ENCODE measurements at regions of chr18 and their contacts with region 1.

Region 1: DNA sequence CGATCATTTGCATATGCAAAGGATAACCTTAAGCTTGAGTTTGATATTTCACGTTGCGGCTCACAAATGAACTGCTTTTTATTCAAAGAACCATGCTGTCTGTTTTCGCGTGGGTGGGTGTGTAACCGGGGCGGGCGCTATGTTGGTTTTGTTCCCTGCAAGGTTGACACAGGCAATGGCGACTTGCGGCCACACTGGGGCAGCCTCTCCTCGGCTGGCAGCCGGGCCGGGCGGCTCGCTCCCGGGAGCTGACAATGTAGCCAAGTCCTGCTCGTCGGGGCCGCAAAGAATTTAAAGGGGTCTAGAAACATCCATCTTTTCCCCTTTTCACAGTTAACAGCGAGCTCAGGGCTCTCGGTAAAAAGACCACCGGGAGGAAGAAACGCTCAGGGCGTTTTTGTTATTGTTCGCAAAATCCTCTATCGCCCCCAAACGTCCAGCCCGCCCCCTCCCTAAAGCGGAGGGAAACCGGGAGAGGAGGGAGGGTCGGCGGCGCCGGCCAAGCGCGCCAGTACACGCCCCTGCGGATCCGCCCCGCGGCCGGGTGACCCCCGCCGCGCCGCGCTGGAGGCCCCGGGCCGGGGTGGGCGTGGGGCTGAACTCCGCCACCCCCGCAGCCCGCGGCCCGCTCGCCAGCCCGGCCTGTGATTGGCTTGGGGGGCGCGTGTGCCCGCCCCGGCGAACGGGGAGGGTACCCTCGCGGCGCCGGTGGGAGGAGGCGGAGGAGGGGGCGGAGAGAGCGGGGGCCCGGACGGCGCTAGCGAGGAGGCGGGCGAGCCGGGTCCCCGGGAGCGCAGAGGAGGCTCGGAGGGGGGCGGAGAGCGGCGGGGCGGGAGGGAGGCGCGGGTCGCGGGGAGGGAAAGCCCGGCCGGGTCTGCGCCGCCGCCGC is at the start of gene NEDD4L:
- DNase-seq: peak; percentile 79 to 85
- H3K4me3 ChIP-seq: peak within 1 kb of the TSS; percentile 81
- H3K4me3 Mint-ChIP-seq: peak within 1 kb of the TSS; percentile 90
- H3K27ac Mint-ChIP-seq: peak within 1 kb of the TSS; percentile 65
- H3K4me1 ChIP-seq: no peaks in the 10 kb centered on the region
- H3K4me1 Mint-ChIP-seq: peaks cover 14% of the 10 kb centered on the region
- H3K27me3 ChIP-seq: no peaks in the 10 kb centered on the region
- H3K27me3 Mint-ChIP-seq: no peaks in the 10 kb centered on the region
- CTCF ChIP-seq: peak; percentile 66 to 71
- total RNA-seq, gene NEDD4L: 84.4 and 85.4 TPM in 2 replicates

Region 2: DNA sequence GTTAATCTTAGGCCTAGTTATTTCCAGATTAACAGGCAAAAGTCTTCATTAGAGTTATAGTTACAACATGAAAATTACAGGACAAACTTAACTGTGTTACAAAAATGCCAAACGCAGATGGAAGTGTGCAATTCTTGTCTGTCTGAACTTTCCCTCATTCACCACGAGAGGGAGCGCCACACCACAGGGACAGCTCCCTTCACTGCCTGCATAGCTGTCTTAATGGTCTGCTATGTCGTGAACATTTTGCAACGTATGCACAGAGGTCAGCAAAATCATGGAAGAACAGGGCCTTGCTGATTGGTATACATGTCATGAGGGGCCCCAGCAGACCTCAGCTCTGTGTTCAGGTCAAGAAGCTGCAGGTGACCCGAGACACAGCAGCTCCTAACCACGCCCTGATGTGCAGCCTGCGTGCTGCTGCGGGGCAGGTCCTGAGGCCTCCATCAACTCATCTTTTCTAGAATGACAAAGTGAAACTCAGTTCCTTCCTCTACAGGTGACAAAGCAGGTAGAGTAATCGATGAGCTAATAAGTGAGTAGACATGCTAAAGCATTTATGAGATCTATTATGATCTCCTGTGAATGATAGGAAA is 161.8 kb before region 1 on chr18:
- CTCF ChIA-PET with region 1: no interaction called
- POLR2A ChIA-PET with region 1: no interaction called
- intact Hi-C with region 1: loop called (anchors 1 kb)
- DNase-seq: peak; percentile 56 to 65
- H3K4me3 ChIP-seq: no peak overlapping the region
- H3K4me3 Mint-ChIP-seq: no peak overlapping the region
- H3K27ac Mint-ChIP-seq: no peak overlapping the region
- H3K4me1 ChIP-seq: peaks cover 4% of the 10 kb centered on the region; the same call in 1 of the 2 replicates
- H3K4me1 Mint-ChIP-seq: no peaks in the 10 kb centered on the region
- H3K27me3 ChIP-seq: no peaks in the 10 kb centered on the region
- H3K27me3 Mint-ChIP-seq: no peaks in the 10 kb centered on the region
- CTCF ChIP-seq: peak; percentile 62 to 66

Region 3: DNA sequence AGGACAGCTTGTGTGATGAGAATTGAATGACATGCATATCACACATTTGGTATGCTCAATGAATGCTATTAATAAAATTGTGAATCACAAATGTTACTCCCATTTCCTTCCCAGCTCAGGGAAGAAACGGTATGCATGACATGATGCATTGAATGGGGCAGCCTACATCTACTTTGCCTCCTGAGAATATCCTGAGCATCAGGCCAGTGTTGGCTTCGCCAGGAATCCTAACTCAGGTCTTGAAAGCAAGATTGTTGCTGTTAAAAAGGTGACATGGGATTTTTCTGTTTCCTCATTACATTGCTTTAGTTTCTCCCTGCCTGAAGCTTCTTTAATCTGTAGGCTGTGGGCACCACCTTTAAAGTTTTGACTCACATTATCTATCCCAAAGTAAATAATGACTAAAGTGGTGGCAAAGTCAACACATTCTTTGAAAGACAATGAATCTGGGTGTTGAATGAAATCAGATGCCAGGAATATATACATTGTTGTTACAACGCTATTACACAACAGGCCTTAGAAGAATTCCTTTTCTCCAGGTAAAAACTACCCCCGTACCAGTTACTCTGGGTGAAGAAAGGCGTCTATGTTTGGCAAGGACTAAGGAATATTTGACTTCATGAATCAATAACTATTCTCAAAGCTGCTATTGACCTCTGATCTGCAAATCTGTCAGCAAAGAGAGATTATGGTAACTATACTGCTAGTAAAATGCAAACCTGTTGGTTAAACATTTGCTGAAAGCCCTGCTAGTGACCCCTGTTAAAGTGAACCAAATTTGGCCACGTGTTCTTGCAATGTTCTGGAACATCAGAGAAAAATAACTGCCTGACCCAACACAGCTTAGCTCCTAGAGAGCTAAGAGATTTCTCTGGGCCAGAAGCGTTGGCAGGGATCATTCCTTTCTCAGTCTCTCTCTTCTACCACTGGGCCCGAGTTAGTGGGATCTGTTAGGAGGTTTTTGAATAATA is 30.2 kb before region 1 on chr18:
- CTCF ChIA-PET with region 1: no interaction called
- POLR2A ChIA-PET with region 1: no interaction called
- intact Hi-C with region 1: loop called (anchors 1 kb)
- DNase-seq: peak; percentile 67 to 68
- H3K4me3 ChIP-seq: no peak overlapping the region
- H3K4me3 Mint-ChIP-seq: no peak overlapping the region
- H3K27ac Mint-ChIP-seq: peak overlapping the region; percentile 35
- H3K4me1 ChIP-seq: peaks cover 47% of the 10 kb centered on the region
- H3K4me1 Mint-ChIP-seq: peaks cover 6% of the 10 kb centered on the region
- H3K27me3 ChIP-seq: no peaks in the 10 kb centered on the region
- H3K27me3 Mint-ChIP-seq: no peaks in the 10 kb centered on the region
- CTCF ChIP-seq: no peak

Region 4: DNA sequence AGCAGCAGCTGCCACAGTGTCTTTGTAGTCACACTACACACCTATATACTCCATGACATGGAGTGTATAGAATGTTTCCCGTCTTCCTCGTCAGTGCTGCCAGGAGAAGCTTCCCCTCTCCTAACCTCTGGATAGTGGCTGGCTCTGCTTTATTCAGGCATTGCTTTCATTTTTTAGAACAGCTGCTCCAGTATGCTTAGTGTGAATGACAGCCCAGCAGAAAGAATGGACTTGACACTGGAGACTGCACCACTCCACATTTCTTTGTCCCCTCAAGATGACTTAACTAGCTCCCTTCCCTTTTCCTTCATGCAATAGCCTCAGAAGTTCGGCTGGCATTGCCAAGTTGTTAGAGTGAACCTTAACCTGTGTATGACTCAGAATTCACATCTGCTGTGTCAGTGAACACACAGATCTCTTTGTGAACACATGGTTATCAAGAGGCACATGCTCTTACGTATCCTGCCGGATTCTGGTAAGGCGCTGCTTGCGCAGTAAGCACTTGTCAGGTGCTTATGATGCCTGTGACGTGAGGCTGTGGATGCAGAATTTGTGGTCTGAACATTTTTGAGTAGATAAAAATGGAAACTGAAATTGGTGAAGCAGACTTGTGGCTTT is 74.2 kb after region 1 on chr18:
- CTCF ChIA-PET with region 1: interaction called, 12 read pairs
- POLR2A ChIA-PET with region 1: no interaction called
- intact Hi-C with region 1: loop called (anchors 1 kb)
- DNase-seq: peak in 1 of 2 experiments; percentile 7
- H3K4me3 ChIP-seq: no peak overlapping the region
- H3K4me3 Mint-ChIP-seq: no peak overlapping the region
- H3K27ac Mint-ChIP-seq: peak overlapping the region; percentile 73
- H3K4me1 ChIP-seq: peaks cover 11% of the 10 kb centered on the region; the same call in 1 of the 2 replicates
- H3K4me1 Mint-ChIP-seq: peaks cover 18% of the 10 kb centered on the region
- H3K27me3 ChIP-seq: no peaks in the 10 kb centered on the region
- H3K27me3 Mint-ChIP-seq: no peaks in the 10 kb centered on the region
- CTCF ChIP-seq: no peak

Region 5: DNA sequence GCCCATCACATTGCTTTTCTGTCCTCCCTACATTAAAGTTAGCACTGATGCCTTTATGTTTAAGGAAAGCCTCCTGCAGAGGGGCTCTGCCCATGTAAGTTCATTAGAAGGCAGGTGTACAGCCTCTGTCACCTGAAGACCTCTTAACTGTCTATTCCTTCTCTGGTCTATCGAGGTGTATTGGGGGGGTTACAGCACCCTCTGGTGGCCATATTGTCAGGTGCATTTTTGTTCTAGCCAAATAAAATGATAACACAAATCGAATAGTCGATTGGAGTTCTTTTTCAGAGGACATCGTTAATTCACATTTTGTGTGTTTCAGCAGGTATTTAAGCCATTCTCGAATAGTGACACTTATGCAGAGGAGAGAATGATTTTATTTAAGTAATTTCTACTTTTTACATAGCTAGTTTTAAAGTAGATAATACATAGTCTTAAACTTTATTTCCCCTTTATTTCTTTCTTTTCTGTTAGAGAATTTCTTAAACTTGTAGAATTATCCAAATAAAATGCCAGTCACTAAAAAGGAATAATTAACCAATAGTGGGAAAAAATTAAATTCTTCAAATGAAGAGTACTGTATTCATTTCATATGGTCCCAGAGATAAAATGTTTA is 137.1 kb after region 1 on chr18:
- CTCF ChIA-PET with region 1: interaction called, 3 read pairs
- POLR2A ChIA-PET with region 1: no interaction called
- intact Hi-C with region 1: loop called (anchors 1 kb)
- DNase-seq: peak; percentile 44 to 53
- H3K4me3 ChIP-seq: no peak overlapping the region
- H3K4me3 Mint-ChIP-seq: no peak overlapping the region
- H3K27ac Mint-ChIP-seq: no peak overlapping the region
- H3K4me1 ChIP-seq: peaks cover 14% of the 10 kb centered on the region
- H3K4me1 Mint-ChIP-seq: peaks cover 20% of the 10 kb centered on the region
- H3K27me3 ChIP-seq: no peaks in the 10 kb centered on the region
- H3K27me3 Mint-ChIP-seq: no peaks in the 10 kb centered on the region
- CTCF ChIP-seq: peak; percentile 44 to 62

Measured in Caco-2 (cell line).